ENCODE measurements at regions of chr2 and their contacts with region 1.

Region 1: DNA sequence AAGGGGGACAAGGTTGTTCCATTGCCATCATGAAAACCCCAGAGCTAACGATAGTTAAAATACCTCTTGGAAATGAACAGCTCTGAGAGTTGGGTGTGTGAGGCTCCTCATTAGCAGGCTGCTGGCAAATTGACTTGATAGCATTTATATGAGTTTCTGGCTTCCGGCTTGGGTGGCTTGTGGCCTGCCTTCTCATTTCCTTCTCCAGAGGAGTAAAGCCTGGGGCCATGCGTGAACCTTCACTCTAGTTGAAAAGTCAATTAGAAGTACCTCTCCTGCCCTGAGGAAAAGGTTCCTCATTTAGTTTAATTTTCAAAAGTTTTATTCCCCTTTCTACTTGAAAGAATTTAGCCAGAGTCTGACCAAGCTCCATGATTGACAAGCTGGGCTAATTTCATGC is 67.1 kb downstream of the MGAT5 start:
- DNase-seq: peak; percentile 66
- ATAC-seq: peak; percentile 69
- H3K4me3 Mint-ChIP-seq: no peak overlapping the region
- H3K27ac Mint-ChIP-seq: peak overlapping the region; percentile 35
- H3K4me1 Mint-ChIP-seq: peaks cover 68% of the 10 kb centered on the region
- H3K27me3 Mint-ChIP-seq: no peaks in the 10 kb centered on the region

Region 2: DNA sequence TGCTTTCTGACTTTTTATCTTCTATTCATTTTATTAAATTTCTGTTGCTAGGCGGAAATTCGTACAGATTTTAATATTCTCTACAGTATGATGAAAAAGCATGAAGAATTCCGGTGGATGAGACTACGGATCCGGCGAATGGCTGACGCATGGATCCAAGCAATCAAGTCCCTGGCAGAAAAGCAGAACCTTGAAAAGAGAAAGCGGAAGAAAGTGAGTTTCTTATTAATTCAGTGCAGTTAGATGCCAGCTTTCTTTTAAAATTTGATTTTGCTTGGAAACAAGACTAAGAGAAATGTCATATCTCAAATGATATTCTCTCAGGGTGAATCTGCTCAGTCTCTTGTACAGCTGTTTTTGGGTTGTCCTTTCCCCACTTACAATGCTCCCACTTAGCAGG is 17.3 kb after region 1 on chr2:
- CTCF ChIA-PET with region 1: interaction called, 13 read pairs
- POLR2A ChIA-PET with region 1: no interaction called
- intact Hi-C with region 1: no loop called
- DNase-seq: no peak
- ATAC-seq: no peak
- H3K4me3 Mint-ChIP-seq: no peak overlapping the region
- H3K27ac Mint-ChIP-seq: no peak overlapping the region
- H3K4me1 Mint-ChIP-seq: peaks cover 9% of the 10 kb centered on the region
- H3K27me3 Mint-ChIP-seq: no peaks in the 10 kb centered on the region

Region 3: GRCh38 chr2:134512734-134513464 is 192.0 kb after region 1 on chr2:
- CTCF ChIA-PET with region 1: no interaction called
- POLR2A ChIA-PET with region 1: no interaction called
- intact Hi-C with region 1: no loop called
- DNase-seq: no peak
- ATAC-seq: no peak
- H3K4me3 Mint-ChIP-seq: no peak overlapping the region
- H3K27ac Mint-ChIP-seq: no peak overlapping the region
- H3K4me1 Mint-ChIP-seq: peaks cover 4% of the 10 kb centered on the region
- H3K27me3 Mint-ChIP-seq: no peaks in the 10 kb centered on the region

Region 4: GRCh38 chr2:134539981-134540380 is 219.1 kb after region 1 on chr2:
- CTCF ChIA-PET with region 1: no interaction called
- POLR2A ChIA-PET with region 1: no interaction called
- intact Hi-C with region 1: no loop called
- DNase-seq: no peak
- ATAC-seq: no peak
- H3K4me3 Mint-ChIP-seq: no peak overlapping the region
- H3K27ac Mint-ChIP-seq: no peak overlapping the region
- H3K4me1 Mint-ChIP-seq: no peaks in the 10 kb centered on the region
- H3K27me3 Mint-ChIP-seq: peaks cover 5% of the 10 kb centered on the region

Measured in activated CD4-positive, alpha-beta T cell treated with anti-CD3 and anti-CD28 coated beads for 36 hours (primary cell).